Aorta (tissue), 5 donors: ENCODE measurements at regions of chrX and their contacts with region 1.

Region 1: DNA sequence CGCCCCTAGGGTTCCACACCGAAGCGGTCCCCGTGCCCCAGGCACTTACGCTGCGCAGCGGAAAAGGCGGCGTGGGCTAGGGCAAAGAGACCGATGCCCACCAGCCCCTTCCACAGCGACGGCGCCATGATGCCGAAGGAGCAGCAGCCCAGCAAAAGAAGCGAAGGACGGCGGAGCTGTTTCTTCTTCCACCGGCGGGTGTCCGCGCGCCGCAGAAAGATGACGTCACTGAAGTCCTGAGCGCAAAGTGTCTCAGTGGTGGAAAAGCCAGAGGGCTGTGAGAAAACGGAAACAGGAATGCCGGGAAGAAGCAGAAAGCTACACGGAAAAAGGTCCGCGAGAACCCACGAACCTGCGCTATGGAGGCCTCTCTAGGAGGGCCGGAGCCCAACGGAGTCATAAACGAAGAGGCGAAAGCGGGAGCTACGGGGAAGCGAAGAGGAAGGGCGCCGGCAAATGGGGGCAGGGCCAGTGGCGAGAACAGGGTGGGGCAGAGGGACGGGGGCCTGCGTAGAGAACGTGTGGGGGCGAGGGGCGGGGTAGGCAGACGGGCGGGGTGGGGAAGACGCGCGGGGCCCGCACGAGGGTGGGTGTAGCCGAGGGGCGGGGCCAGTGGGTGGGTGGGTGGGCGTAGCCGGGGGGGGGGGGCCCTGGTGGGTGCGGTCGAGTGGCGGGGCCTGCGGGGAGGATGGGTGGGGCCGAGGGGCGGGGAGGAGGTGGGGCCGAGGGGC is at the start of gene MMGT1:
- DNase-seq: peak; percentile 91 to 93
- ATAC-seq: peak; percentile 91
- H3K4me3 ChIP-seq: peak within 1 kb of the TSS; percentile 22 to 76
- H3K27ac ChIP-seq: peak within 1 kb of the TSS; percentile 29 to 92
- H3K4me1 ChIP-seq: no peaks in the 10 kb centered on the region
- H3K27me3 ChIP-seq: no peaks in the 10 kb centered on the region
- total RNA-seq, gene MMGT1: 27.8 to 33.1 TPM

Region 2: DNA sequence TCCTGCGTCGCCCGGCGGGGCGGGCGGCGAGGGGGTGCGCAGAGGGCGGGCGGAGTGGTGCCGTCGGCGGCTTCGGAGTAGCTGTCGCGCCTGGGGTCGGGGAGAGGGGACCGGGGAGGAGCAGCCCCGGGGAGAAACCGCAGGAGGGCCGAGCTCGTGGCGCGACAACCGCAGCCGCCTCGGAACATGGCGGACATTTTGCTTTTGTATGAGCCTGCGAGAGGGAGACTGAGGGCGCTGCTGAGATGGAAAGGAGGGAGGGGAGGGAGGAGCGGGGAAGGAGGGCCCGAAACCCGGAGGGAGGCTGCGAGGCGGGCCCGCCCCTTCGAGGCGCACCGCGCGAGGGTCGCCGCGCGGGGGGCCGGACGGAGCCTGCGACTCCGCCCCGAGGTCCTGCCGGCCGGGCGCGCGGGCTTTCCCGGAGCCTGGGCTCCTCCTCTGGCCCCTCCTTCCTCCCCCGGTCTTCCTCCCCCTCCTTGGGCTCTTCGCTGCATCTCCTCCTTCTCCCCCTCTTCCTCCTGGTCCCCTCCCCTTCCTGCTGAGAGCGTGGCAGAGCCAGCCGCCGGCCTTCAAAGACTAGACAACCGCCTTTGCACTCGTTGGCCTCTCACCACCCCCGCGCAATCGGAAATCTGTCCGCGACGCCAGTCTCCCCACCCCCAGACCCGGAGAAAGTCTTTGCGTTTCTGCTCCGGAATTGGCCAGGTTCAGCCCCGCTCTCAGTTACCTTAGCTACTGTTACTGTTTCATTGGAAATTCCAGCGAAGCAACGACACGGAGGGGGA is 452.1 kb before region 1 on chrX:
- intact Hi-C with region 1: loop called in 1 of 2 experiments (anchors 2 kb)
- DNase-seq: peak; percentile 90 to 91
- ATAC-seq: peak; percentile 93
- H3K4me3 ChIP-seq: peak overlapping the region; percentile 44 to 69
- H3K27ac ChIP-seq: peak overlapping the region; percentile 31 to 91
- H3K4me1 ChIP-seq: peaks cover 0 to 2% of the 10 kb centered on the region in 2 donors
- H3K27me3 ChIP-seq: no peaks in the 10 kb centered on the region

Region 3: DNA sequence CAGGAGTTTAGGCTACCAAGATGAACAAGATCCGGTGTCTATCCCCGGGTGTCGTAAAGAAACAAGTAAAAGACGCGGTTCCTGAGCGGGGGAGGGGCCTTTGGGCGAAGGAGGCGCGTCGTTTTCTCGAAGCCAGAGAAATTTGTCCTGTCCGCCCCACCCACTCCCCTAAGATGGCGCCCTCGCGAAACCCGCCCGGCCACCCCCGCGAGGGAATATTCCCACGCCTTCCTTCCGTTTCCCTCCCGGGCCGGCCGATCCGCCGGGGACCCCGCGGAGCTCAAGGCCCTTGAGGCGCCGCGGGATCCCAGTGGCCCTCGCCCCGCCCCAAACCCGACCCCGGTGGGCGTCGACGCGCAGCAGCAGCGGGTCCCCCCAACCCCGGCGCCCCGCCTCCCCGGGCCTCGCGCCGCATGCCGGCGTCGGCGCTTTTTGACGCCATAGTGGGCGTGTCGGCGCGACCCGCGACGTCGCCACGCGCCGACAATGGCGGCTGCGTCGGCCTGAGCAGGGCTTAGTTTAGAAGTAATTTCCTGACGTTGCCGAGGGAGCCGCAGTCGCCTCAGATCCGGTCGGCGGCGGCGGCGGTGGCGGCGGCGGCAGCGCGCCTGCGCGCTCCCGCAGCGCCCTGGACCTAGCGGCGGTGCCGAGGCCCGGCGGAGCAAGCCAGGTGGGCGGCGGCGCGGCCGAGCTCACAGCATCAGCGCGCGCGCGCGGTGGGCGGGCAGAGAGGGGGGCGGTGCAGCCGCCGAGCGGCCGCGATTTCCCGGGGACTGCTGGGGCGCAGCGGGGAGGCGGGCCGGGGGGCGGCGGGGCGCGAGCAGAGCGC is 523.3 kb after region 1 on chrX and contains the start of gene HTATSF1:
- intact Hi-C with region 1: loop called in 1 of 2 experiments (anchors 5 kb)
- DNase-seq: peak; percentile 91 to 92
- ATAC-seq: peak; percentile 94
- H3K4me3 ChIP-seq: peak within 1 kb of the TSS; percentile 72 to 74
- H3K27ac ChIP-seq: peak within 1 kb of the TSS in 1 of 2 donors; percentile 71
- H3K4me1 ChIP-seq: no peaks in the 10 kb centered on the region
- H3K27me3 ChIP-seq: no peaks in the 10 kb centered on the region
- total RNA-seq, gene HTATSF1: 28.0 to 28.1 TPM